GM12878 (cell line): ENCODE measurements at regions of chr14 and their contacts with region 1.

Region 1: GRCh38 chr14:93970549-93970946 is 5.8 kb downstream of the ASB2 start:
- DNase-seq: no peak
- ATAC-seq: peak; percentile 66
- H3K4me3 ChIP-seq: peak overlapping the region; percentile 37; the same call in 1 of the 2 replicates
- H3K27ac ChIP-seq: peak overlapping the region; percentile 85
- H3K4me1 ChIP-seq: peaks cover 92% of the 10 kb centered on the region
- H3K27me3 ChIP-seq: no peaks in the 10 kb centered on the region
- CTCF ChIP-seq: peak; percentile 38 to 53 (median 47); a peak in 5 of 6 replicates
- EP300 ChIP-seq: no peak
- POLR2A ChIP-seq: no peak
- RAD21 ChIP-seq: peak; percentile 65

Region 2: DNA sequence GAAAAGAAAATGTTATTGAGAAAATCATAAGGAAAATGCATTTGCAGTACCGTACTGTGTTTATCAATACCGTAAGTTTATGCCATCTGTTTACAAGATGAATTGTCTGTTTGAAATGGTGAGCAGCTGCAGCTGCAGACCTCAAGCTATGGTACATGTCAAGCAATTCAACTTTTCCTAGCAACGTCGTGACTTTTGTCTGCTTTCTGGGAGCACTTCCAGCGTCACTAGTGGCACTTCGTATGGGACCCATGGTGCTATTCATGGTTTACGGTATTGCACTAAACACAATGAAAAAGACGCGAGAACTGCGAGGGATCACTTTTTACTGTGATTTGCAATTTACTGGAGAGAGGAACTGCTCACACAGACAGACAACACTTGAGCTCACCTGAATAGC is 379.0 kb before region 1 on chr14:
- CTCF ChIA-PET with region 1: no interaction called
- POLR2A ChIA-PET with region 1: no interaction called
- RAD21 ChIA-PET with region 1: no interaction called
- SMC1A ChIA-PET with region 1: no interaction called
- in situ Hi-C with region 1: no loop called
- intact Hi-C with region 1: no loop called
- DNase-seq: no peak
- ATAC-seq: no peak
- H3K4me3 ChIP-seq: no peak overlapping the region
- H3K27ac ChIP-seq: no peak overlapping the region
- H3K4me1 ChIP-seq: no peaks in the 10 kb centered on the region
- H3K27me3 ChIP-seq: no peaks in the 10 kb centered on the region
- CTCF ChIP-seq: no peak
- EP300 ChIP-seq: no peak
- POLR2A ChIP-seq: no peak
- RAD21 ChIP-seq: no peak

Region 3: GRCh38 chr14:93880021-93880820 is 90.3 kb before region 1 on chr14:
- CTCF ChIA-PET with region 1: no interaction called
- POLR2A ChIA-PET with region 1: no interaction called
- RAD21 ChIA-PET with region 1: no interaction called
- SMC1A ChIA-PET with region 1: no interaction called
- in situ Hi-C with region 1: no loop called
- intact Hi-C with region 1: no loop called
- DNase-seq: no peak
- ATAC-seq: no peak
- H3K4me3 ChIP-seq: no peak overlapping the region
- H3K27ac ChIP-seq: no peak overlapping the region
- H3K4me1 ChIP-seq: no peaks in the 10 kb centered on the region
- H3K27me3 ChIP-seq: peaks cover 0 to 2% of the 10 kb centered on the region in 2 experiments; a peak in 2 of 4 replicates
- CTCF ChIP-seq: no peak
- EP300 ChIP-seq: no peak
- POLR2A ChIP-seq: no peak
- RAD21 ChIP-seq: no peak

Region 4: GRCh38 chr14:93946104-93946503 is 24.4 kb before region 1 on chr14:
- CTCF ChIA-PET with region 1: interaction called, 343 read pairs
- POLR2A ChIA-PET with region 1: interaction called, 3 read pairs
- RAD21 ChIA-PET with region 1: interaction called, 209 read pairs
- SMC1A ChIA-PET with region 1: interaction called, 409 read pairs
- in situ Hi-C with region 1: no loop called
- intact Hi-C with region 1: no loop called
- DNase-seq: no peak
- ATAC-seq: peak; percentile 84
- H3K4me3 ChIP-seq: no peak overlapping the region
- H3K27ac ChIP-seq: no peak overlapping the region
- H3K4me1 ChIP-seq: peaks cover 3% of the 10 kb centered on the region
- H3K27me3 ChIP-seq: no peaks in the 10 kb centered on the region
- CTCF ChIP-seq: no peak
- EP300 ChIP-seq: no peak
- POLR2A ChIP-seq: no peak
- RAD21 ChIP-seq: no peak

Region 5: DNA sequence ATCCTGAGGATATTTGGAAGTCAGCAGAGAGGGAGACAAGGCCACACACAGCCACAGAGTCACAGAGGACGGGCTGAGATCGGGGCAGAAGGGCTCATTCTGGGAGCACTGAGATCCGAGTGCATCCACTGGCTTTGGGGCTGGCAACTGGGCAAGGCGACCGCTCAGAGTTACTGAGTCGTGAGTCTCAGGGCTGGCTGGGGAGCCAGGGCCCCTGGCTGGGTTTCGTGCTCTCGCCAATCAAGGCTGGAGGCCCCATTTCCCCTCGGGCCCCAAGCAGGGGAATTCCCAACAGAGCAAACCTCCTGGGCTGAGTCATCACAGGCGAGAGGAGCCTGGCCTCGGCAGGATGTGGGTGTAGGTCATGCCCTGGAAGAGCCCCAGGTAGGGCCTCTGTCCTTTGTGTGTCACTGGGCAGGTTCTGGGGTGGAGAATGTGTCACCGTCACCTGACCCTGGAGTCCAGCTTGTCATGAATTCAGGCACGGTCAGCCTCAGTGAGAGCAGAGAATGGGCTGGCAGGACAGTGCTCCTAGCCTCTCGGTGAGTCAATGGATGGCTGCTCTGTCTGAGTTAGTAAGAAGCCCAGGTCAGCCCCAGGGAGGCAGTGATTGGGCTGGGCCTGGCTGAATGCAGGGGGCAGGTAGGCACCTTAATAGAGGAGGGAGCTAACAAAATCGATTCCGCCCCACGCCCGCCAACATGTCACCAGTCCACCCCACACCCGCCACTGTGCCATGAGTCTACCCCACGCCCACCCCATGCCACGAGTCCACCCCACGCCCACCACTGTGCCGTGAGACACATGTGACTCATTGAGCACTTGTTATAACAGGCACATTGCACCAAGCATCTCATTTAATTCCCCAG is 11.1 kb before region 1 on chr14:
- CTCF ChIA-PET with region 1: interaction called, 73 read pairs
- POLR2A ChIA-PET with region 1: interaction called, 128 read pairs
- RAD21 ChIA-PET with region 1: interaction called, 324 read pairs
- SMC1A ChIA-PET with region 1: interaction called, 409 read pairs
- in situ Hi-C with region 1: no loop called
- intact Hi-C with region 1: loop called (anchors 1 kb)
- DNase-seq: peak; percentile 90
- ATAC-seq: peak; percentile 82
- H3K4me3 ChIP-seq: peak overlapping the region; percentile 11; the same call in 1 of the 2 replicates
- H3K27ac ChIP-seq: peak overlapping the region; percentile 90
- H3K4me1 ChIP-seq: peaks cover 95% of the 10 kb centered on the region
- H3K27me3 ChIP-seq: no peaks in the 10 kb centered on the region
- CTCF ChIP-seq: no peak
- EP300 ChIP-seq: peak; percentile 98 to 99
- POLR2A ChIP-seq: peak; percentile 91
- RAD21 ChIP-seq: no peak

Region 6: GRCh38 chr14:93991212-93991611 is 20.7 kb after region 1 on chr14:
- CTCF ChIA-PET with region 1: interaction called, 399 read pairs
- POLR2A ChIA-PET with region 1: interaction called, 4 read pairs
- RAD21 ChIA-PET with region 1: interaction called, 182 read pairs
- SMC1A ChIA-PET with region 1: interaction called, 155 read pairs
- in situ Hi-C with region 1: no loop called
- intact Hi-C with region 1: no loop called
- DNase-seq: no peak
- ATAC-seq: no peak
- H3K4me3 ChIP-seq: no peak overlapping the region
- H3K27ac ChIP-seq: no peak overlapping the region
- H3K4me1 ChIP-seq: peaks cover 19% of the 10 kb centered on the region
- H3K27me3 ChIP-seq: no peaks in the 10 kb centered on the region
- CTCF ChIP-seq: no peak
- EP300 ChIP-seq: no peak
- POLR2A ChIP-seq: no peak
- RAD21 ChIP-seq: no peak

Region 7: DNA sequence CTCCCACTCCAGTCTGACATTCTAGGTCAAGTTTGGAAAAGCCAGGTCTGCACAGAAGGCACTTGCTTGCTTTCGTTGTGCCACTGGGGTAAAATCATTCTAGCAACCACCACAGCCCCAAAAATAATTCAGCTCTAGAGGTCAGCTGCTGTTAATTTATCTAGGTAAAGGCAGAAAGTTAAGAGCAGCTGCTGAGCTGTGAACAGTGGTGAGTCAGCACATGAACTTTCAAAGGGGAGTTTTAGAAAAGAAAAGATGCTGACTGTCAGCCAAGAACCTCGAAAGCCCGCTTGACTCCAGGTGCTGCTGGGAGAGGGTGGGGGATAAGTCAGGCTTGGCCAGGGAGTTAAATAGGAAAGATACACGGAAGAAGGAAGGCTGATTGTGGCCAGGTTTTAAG is 39.2 kb after region 1 on chr14:
- CTCF ChIA-PET with region 1: interaction called, 399 read pairs
- POLR2A ChIA-PET with region 1: no interaction called
- RAD21 ChIA-PET with region 1: interaction called, 9 read pairs
- SMC1A ChIA-PET with region 1: interaction called, 10 read pairs
- in situ Hi-C with region 1: no loop called
- intact Hi-C with region 1: no loop called
- DNase-seq: peak; percentile 25
- ATAC-seq: peak; percentile 86
- H3K4me3 ChIP-seq: no peak overlapping the region; the same call in 1 of the 2 replicates
- H3K27ac ChIP-seq: peak overlapping the region; percentile 20; the same call in 1 of the 2 replicates
- H3K4me1 ChIP-seq: peaks cover 36% of the 10 kb centered on the region
- H3K27me3 ChIP-seq: no peaks in the 10 kb centered on the region
- CTCF ChIP-seq: no peak
- EP300 ChIP-seq: peak; percentile 10 to 57; a peak in 1 of 4 replicates
- POLR2A ChIP-seq: no peak
- RAD21 ChIP-seq: no peak